ENCODE measurements at regions of chr9 and their contacts with region 1.

Region 1: DNA sequence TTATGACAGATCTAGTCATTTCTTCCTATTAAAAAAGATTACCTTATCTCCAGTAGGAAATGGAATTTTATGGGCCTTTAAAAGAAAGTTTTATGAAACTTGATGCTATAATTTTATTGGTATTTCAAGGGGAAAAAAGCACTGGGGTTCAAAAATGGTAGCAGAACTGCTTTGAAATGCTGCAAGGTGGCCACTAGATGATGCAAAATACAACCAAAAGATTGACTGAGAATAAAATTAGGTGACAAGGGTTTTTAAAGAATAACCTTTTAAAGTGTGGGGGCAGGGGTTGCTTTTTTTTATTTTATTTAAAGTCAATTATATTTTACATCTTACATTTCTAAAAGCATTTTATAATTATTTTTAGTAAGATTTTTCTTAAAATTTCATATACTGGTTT is 61.7 kb downstream of the KLF9 start:
- DNase-seq: no peak
- ATAC-seq: peak in 1 of 4 donors; percentile 51
- H3K4me3 ChIP-seq: no peak overlapping the region
- H3K27ac ChIP-seq: no peak overlapping the region
- H3K4me1 ChIP-seq: no peaks in the 10 kb centered on the region
- H3K27me3 ChIP-seq: no peaks in the 10 kb centered on the region
- CTCF ChIP-seq: peak in 3 of 4 donors; percentile 13 to 27 (median 23)

Region 2: DNA sequence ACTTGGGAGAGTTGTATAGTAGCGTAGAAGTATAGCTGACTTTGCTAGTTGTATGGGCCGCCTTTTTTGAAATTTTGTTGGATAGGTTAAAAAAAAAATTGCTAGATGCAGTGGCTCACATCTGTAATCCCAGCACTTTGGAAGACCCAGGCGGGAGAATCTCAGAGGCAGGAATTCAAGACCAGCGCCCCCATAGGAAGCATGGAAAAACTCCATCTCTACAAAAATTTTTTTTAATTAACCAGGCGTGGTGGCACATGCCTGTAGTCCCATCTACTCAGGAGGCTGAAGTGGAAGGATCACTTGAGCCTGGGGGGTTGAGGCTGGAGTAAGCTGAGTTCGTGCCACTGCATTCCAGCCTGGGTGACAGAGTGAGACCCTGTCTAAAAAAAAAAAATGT is 34.8 kb before region 1 on chr9:
- intact Hi-C with region 1: no loop called
- DNase-seq: no peak
- ATAC-seq: no peak
- H3K4me3 ChIP-seq: no peak overlapping the region
- H3K27ac ChIP-seq: no peak overlapping the region
- H3K4me1 ChIP-seq: no peaks in the 10 kb centered on the region
- H3K27me3 ChIP-seq: no peaks in the 10 kb centered on the region
- CTCF ChIP-seq: no peak

Region 3: GRCh38 chr9:70484210-70485130 is 131.7 kb after region 1 on chr9:
- intact Hi-C with region 1: loop called in 2 of 3 experiments (anchors 10 kb)
- DNase-seq: peak in 3 of 6 donors; percentile 38 to 50 (median 38)
- ATAC-seq: peak; percentile 36 to 80 (median 70)
- H3K4me3 ChIP-seq: no peak overlapping the region
- H3K27ac ChIP-seq: no peak overlapping the region
- H3K4me1 ChIP-seq: peaks cover 22 to 32% (median 29%) of the 10 kb centered on the region in 3 donors
- H3K27me3 ChIP-seq: no peaks in the 10 kb centered on the region
- CTCF ChIP-seq: peak; percentile 29 to 69 (median 63)

Region 4: DNA sequence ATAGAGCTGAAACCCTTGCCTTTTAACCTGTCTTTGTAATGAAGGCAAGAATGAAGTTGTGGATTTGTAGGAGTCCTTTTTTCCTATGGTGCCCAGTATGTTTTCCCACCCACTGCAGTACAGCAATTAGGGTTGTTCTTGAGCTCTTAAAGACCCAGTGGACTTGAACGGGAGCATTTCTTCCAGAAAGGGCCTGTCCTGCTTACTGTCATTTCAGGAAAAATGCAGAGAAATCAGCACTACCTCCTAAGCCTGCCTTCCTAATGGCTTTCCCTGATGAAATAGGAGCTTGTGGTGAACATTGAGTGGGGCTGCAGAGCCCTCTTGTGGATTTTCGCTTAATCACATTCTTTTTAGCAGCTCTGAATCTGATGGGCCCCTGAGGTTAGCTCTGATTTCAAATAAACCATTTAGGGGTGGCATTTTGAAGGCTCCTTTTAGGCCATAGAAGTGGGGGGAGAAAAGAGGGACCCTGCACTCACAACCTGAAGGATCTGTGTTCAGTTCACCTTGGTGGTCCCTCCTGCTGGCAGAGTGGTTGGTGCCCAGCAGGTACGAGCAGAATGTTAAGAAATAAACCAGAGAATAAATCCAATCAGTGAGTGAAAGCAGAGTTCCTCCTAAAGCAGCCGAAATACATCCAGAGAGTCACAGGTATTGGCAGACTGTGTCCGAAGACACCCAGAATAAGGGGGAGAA is 249.7 kb after region 1 on chr9:
- intact Hi-C with region 1: loop called in 2 of 3 experiments (anchors 5 to 10 kb)
- DNase-seq: peak in 3 of 6 donors; percentile 33 to 69 (median 36)
- ATAC-seq: peak; percentile 85 to 91 (median 91)
- H3K4me3 ChIP-seq: no peak overlapping the region
- H3K27ac ChIP-seq: no peak overlapping the region
- H3K4me1 ChIP-seq: peaks cover 3 to 9% (median 7%) of the 10 kb centered on the region in 3 donors
- H3K27me3 ChIP-seq: no peaks in the 10 kb centered on the region
- CTCF ChIP-seq: peak; percentile 31 to 72 (median 51)

Measured in pancreas (tissue), 10 donors.